Left lung (tissue), 14 donors: ENCODE measurements at regions of chr5 and their contacts with region 1.

Region 1: GRCh38 chr5:52665559-52665958 is 122.2 kb upstream of the ITGA1 start:
- DNase-seq: peak in 1 of 4 donors; percentile 26
- ATAC-seq: no peak
- H3K4me3 ChIP-seq: no peak overlapping the region
- H3K27ac ChIP-seq: no peak overlapping the region
- H3K4me1 ChIP-seq: peaks cover 0 to 4% of the 10 kb centered on the region in 2 donors
- H3K27me3 ChIP-seq: no peaks in the 10 kb centered on the region
- CTCF ChIP-seq: no peak

Region 2: DNA sequence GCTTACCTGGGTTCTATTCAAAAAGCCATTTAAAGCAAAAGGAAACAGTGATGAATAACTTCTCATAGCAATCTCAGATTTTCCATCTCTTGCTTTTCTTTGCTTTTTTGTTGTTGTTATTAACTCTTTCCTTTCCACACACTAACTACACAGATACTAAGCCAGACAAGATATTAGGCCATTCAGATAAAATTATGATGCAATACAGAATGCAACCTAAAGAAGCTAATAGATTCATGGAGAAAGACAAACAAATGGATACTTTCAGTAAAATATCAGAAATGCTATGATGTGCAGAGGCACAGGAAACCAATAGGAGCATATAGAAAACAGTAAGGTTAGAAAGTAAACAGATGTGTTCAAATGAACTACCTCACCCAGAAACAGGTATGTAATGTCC is 474.8 kb before region 1 on chr5:
- intact Hi-C with region 1: no loop called
- DNase-seq: no peak
- ATAC-seq: no peak
- H3K4me3 ChIP-seq: no peak overlapping the region
- H3K27ac ChIP-seq: no peak overlapping the region
- H3K4me1 ChIP-seq: no peaks in the 10 kb centered on the region
- H3K27me3 ChIP-seq: no peaks in the 10 kb centered on the region
- CTCF ChIP-seq: no peak

Region 3: GRCh38 chr5:52915176-52915875 is 249.8 kb after region 1 on chr5:
- intact Hi-C with region 1: loop called in 1 of 2 experiments (anchors 10 kb)
- DNase-seq: peak in 2 of 4 donors; percentile 72 to 79
- ATAC-seq: peak; percentile 100
- H3K4me3 ChIP-seq: peak overlapping the region in 1 of 2 donors; percentile 15
- H3K27ac ChIP-seq: peak overlapping the region in 1 of 2 donors; percentile 34
- H3K4me1 ChIP-seq: peaks cover 2 to 5% of the 10 kb centered on the region in 2 donors
- H3K27me3 ChIP-seq: no peaks in the 10 kb centered on the region
- CTCF ChIP-seq: peak; percentile 58 to 77

Region 4: GRCh38 chr5:53343187-53343586 is 677.6 kb after region 1 on chr5:
- intact Hi-C with region 1: no loop called
- DNase-seq: no peak
- ATAC-seq: peak; percentile 25
- H3K4me3 ChIP-seq: no peak overlapping the region
- H3K27ac ChIP-seq: no peak overlapping the region
- H3K4me1 ChIP-seq: no peaks in the 10 kb centered on the region
- H3K27me3 ChIP-seq: no peaks in the 10 kb centered on the region
- CTCF ChIP-seq: no peak